PC-3 (cell line): ENCODE measurements at regions of chr17 and their contacts with region 1.

Region 1: GRCh38 chr17:60525685-60526514 is at the start of gene APPBP2:
- DNase-seq: peak; percentile 94
- ATAC-seq: peak; percentile 96
- H3K4me3 ChIP-seq: peak within 1 kb of the TSS; percentile 94
- H3K27ac ChIP-seq: peak within 1 kb of the TSS; percentile 78
- H3K4me1 ChIP-seq: peaks cover 10% of the 10 kb centered on the region
- H3K27me3 ChIP-seq: no peaks in the 10 kb centered on the region
- CTCF ChIP-seq: no peak
- total RNA-seq, gene APPBP2: 17.1 and 21.4 TPM in 2 replicates

Region 2: DNA sequence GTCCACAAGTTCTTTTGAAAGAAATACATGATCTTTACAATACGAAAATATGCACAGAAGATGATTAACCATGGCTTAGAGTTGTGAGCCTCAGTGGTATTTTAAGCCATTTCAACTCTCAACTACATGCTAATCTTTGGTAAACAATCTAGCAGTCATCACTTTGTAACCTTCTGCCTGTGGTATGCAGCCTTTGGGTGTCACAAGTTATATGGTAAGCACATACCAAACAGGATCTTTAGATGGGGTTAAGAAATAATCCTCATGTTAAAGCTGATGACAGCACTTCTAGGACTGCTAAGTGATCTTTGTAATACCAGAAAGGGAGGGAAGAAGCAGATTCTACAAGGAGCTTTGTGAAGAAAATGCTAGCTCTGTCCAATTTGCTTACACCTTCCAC is 301.8 kb before region 1 on chr17:
- CTCF ChIA-PET with region 1: interaction called, 11 read pairs
- POLR2A ChIA-PET with region 1: no interaction called
- intact Hi-C with region 1: no loop called
- DNase-seq: no peak
- ATAC-seq: no peak
- H3K4me3 ChIP-seq: no peak overlapping the region
- H3K27ac ChIP-seq: no peak overlapping the region
- H3K4me1 ChIP-seq: no peaks in the 10 kb centered on the region
- H3K27me3 ChIP-seq: no peaks in the 10 kb centered on the region
- CTCF ChIP-seq: no peak

Region 3: GRCh38 chr17:60473788-60474187 is 52.1 kb before region 1 on chr17:
- CTCF ChIA-PET with region 1: no interaction called
- POLR2A ChIA-PET with region 1: interaction called, 10 read pairs
- intact Hi-C with region 1: no loop called
- DNase-seq: no peak
- ATAC-seq: no peak
- H3K4me3 ChIP-seq: no peak overlapping the region
- H3K27ac ChIP-seq: no peak overlapping the region
- H3K4me1 ChIP-seq: peaks cover 10% of the 10 kb centered on the region
- H3K27me3 ChIP-seq: no peaks in the 10 kb centered on the region
- CTCF ChIP-seq: no peak

Region 4: DNA sequence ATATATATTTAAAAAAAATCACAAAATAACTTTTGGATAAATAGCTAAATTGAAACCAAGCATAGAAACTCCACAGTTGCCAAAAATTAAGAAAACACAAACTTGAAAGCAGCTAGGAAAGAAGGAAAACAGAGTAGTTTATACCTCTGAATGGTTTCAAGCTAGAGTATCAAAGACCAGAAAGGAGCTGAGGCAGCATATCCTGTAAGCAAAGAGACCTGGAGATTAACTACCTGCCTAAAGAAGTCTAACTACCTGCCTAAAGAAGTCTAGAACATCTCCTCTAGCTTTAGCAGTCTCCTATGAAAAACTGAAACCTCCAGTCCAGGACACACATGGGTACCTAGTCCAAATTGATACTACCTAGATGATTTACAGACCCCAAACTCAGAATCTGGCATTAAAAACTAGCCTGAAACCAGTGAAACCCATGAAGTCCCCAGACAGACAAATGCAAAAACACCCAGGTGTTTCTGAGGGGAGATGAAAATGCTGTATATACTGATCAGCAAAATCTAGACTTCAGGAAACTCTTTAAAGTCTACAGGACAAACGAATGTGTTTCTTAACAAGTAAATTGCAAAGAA is 17.4 kb before region 1 on chr17:
- CTCF ChIA-PET with region 1: no interaction called
- POLR2A ChIA-PET with region 1: interaction called, 14 read pairs
- intact Hi-C with region 1: no loop called
- DNase-seq: no peak
- ATAC-seq: no peak
- H3K4me3 ChIP-seq: no peak overlapping the region
- H3K27ac ChIP-seq: no peak overlapping the region
- H3K4me1 ChIP-seq: peaks cover 16% of the 10 kb centered on the region
- H3K27me3 ChIP-seq: no peaks in the 10 kb centered on the region
- CTCF ChIP-seq: no peak

Region 5: DNA sequence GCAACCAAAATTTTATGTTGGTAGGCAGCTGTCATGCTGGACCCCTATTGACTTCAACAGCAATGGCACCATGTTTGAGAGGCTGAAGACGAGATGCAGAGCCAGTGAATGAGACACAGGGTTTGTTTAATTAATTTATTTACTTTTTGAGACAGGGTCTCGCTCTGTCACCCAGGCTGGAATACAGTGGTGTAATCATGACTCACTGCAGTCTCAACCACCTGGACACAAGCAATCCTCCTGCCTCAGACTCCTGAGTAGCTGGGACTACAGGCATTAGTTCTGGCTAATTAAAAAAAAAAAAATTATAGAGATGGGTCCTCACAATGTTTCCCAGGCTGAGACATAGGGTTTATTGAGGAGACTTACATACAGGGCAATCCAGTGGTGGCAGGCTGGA is 37.8 kb after region 1 on chr17:
- CTCF ChIA-PET with region 1: no interaction called
- POLR2A ChIA-PET with region 1: no interaction called
- intact Hi-C with region 1: loop called (anchors 2 kb)
- DNase-seq: peak; percentile 68
- ATAC-seq: peak; percentile 74
- H3K4me3 ChIP-seq: no peak overlapping the region
- H3K27ac ChIP-seq: no peak overlapping the region
- H3K4me1 ChIP-seq: peaks cover 7% of the 10 kb centered on the region; the same call in 1 of the 2 replicates
- H3K27me3 ChIP-seq: no peaks in the 10 kb centered on the region
- CTCF ChIP-seq: no peak

Region 6: GRCh38 chr17:60641810-60642220 is 115.9 kb after region 1 on chr17:
- CTCF ChIA-PET with region 1: interaction called, 3 read pairs
- POLR2A ChIA-PET with region 1: interaction called, 6 read pairs
- intact Hi-C with region 1: loop called (anchors 2 kb)
- DNase-seq: peak; percentile 93
- ATAC-seq: peak; percentile 80
- H3K4me3 ChIP-seq: no peak overlapping the region
- H3K27ac ChIP-seq: peak overlapping the region; percentile 25
- H3K4me1 ChIP-seq: peaks cover 13% of the 10 kb centered on the region
- H3K27me3 ChIP-seq: no peaks in the 10 kb centered on the region
- CTCF ChIP-seq: peak; percentile 81